Activated naive CD4-positive, alpha-beta T cell treated with anti-CD3 and anti-CD28 coated beads for 36 hours (primary cell): ENCODE measurements at regions of chr15 and their contacts with region 1.

Region 1: DNA sequence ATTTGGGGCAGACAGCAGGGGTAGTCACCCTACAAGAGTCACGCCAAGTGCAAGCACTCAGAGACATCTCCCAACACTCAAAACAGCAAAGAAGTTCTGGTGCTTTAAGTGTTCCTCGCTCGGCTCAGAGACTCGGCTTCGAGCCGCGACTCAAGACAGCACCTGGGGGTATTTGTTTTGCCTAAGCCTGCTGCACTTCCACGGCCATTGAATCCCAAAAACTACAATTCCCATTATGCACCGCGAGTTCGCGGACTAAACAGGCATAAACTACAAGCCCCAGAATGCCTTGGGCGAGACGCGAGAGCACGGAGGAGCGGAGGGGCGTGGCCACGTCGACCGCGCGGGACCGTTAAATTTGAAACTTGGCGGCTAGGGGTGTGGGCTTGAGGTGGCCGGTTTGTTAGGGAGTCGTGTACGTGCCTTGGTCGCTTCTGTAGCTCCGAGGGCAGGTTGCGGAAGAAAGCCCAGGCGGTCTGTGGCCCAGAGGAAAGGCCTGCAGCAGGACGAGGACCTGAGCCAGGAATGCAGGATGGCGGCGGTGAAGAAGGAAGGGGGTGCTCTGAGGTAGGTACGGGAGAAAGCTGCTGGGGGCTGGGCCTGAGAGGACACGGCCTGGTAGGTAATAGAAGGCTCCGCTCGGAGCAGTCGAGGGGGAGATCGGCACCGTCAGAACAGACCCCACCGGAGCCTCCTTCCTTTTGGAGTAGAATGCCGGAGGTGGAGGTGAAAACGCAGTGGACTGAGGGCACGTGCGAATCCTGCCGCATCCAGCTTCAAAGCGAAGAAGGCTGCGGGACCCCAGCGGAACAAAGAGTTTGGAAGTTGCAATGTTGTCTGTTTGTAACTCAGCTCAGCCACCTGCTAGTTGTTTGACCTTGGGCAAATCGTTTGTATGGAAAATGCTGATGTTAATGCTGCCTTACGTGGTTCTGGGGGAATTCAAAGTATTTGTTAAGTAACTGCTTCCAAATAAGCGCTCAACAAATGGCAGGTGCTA is at the start of gene BUB1B:
- DNase-seq: peak; percentile 96
- H3K4me3 Mint-ChIP-seq: no peak within 1 kb of the TSS
- H3K27ac Mint-ChIP-seq: no peak within 1 kb of the TSS
- H3K4me1 Mint-ChIP-seq: peaks cover 6% of the 10 kb centered on the region
- H3K27me3 Mint-ChIP-seq: no peaks in the 10 kb centered on the region
- total RNA-seq, gene BUB1B: 102 to 106 TPM

Region 2: GRCh38 chr15:39920510-39921273 is 240.3 kb before region 1 on chr15:
- CTCF ChIA-PET with region 1: no interaction called
- intact Hi-C with region 1: loop called (anchors 5 kb)
- DNase-seq: peak; percentile 87
- H3K4me3 Mint-ChIP-seq: peak overlapping the region; percentile 84
- H3K27ac Mint-ChIP-seq: peak overlapping the region; percentile 65
- H3K4me1 Mint-ChIP-seq: peaks cover 17% of the 10 kb centered on the region
- H3K27me3 Mint-ChIP-seq: peaks cover 20% of the 10 kb centered on the region

Region 3: DNA sequence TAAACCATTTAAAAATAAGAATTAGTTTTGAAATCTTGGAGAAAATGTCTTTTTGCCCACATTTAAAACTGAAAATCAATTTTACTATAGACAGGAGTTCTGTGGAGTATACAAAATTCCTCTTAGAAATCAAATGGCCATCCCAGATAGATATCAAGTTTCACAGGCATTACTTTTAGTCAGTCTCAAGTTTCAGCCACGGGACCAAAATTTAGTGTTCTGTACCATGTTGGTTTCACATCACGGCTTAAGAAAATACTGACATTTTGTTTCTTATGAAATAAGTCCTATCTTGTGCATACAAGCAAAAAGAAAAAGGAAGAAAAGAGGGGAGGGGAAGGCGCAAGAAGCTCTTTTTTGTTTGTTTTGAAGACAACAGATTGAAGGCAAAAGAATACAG is 181.4 kb before region 1 on chr15:
- CTCF ChIA-PET with region 1: no interaction called
- intact Hi-C with region 1: no loop called
- DNase-seq: no peak
- H3K4me3 Mint-ChIP-seq: no peak overlapping the region
- H3K27ac Mint-ChIP-seq: no peak overlapping the region
- H3K4me1 Mint-ChIP-seq: no peaks in the 10 kb centered on the region
- H3K27me3 Mint-ChIP-seq: no peaks in the 10 kb centered on the region

Region 4: DNA sequence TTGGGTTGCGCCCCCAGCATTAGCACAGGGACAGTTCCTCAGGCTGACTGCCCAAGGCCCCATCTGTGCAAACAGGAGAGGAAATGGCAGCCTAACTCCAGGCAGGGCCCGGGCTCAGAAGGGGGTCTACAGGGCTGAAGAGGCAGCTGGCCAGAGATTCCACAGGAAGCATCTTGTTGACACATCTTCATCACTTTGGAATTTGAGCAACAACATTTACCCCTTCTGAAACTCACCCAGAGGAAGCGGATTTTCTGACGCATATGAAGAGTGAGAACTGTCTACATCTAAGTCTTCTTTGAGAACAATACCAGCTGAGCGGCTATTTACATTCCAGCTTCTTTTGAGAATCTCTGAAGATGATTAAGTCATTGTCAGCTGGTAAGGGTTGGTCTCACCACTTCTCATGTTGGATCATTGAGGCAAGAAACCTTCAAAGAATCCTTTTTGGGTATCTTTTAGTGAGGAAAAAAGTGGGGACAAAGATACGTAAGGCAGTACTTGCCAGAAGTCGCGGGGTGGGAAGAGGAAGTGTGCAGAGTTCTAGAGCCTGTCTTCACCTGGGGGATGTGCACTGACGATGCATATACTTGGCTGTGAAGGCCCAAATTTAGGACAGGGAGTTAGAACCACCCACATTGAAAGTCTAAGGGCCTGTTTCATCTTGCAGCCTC is 96.6 kb before region 1 on chr15:
- CTCF ChIA-PET with region 1: interaction called, 3 read pairs
- intact Hi-C with region 1: loop called (anchors 1 kb)
- DNase-seq: peak; percentile 58
- H3K4me3 Mint-ChIP-seq: no peak overlapping the region
- H3K27ac Mint-ChIP-seq: peak overlapping the region; percentile 64
- H3K4me1 Mint-ChIP-seq: peaks cover 17% of the 10 kb centered on the region
- H3K27me3 Mint-ChIP-seq: no peaks in the 10 kb centered on the region

Region 5: DNA sequence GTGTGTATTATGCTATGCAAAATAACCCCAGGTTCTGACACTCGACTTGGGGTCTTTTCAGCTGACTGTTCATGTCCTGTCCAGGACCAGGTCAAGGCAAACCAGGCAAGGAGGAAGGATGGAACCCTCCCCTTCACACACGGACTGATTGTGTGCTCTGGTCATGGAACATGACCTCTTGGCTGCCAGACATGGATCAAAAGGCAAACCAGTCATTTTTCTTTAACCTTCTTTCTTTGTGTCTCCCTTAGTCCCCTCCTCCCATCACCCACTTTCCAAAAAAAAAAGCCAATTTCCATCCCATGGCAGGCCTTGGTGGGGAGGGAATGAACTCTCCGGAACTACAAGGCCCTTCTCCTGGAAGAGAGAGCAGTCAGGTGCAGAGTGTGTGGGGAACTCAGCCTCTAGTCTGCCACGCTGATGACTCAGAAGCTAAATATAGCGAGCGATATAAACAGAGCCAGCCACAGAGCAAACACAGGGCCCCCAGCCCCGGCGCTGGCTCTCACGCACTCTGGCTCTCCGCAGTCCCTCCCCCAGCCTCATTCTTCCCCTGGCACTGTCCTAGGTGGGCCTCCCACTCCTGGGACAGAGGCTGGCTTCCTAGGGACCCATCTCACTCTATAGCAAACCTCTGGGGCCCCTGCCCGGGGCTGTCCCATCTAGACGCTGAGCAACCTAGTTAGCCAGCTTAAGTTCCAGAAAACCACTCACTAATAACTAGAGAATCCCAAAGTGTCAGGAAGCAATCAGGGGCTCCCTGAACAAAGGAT is 62.3 kb before region 1 on chr15:
- CTCF ChIA-PET with region 1: interaction called, 18 read pairs
- intact Hi-C with region 1: loop called (anchors 1 kb)
- DNase-seq: peak; percentile 87
- H3K4me3 Mint-ChIP-seq: peak overlapping the region; percentile 54
- H3K27ac Mint-ChIP-seq: peak overlapping the region; percentile 96
- H3K4me1 Mint-ChIP-seq: peaks cover 70% of the 10 kb centered on the region
- H3K27me3 Mint-ChIP-seq: no peaks in the 10 kb centered on the region

Region 6: GRCh38 chr15:40128766-40129660 is 32.0 kb before region 1 on chr15:
- CTCF ChIA-PET with region 1: no interaction called
- intact Hi-C with region 1: loop called (anchors 2 kb)
- DNase-seq: peak; percentile 45
- H3K4me3 Mint-ChIP-seq: no peak overlapping the region
- H3K27ac Mint-ChIP-seq: no peak overlapping the region
- H3K4me1 Mint-ChIP-seq: no peaks in the 10 kb centered on the region
- H3K27me3 Mint-ChIP-seq: no peaks in the 10 kb centered on the region